MCF 10A (cell line): ENCODE measurements at regions of chr3 and their contacts with region 1.

Region 1: DNA sequence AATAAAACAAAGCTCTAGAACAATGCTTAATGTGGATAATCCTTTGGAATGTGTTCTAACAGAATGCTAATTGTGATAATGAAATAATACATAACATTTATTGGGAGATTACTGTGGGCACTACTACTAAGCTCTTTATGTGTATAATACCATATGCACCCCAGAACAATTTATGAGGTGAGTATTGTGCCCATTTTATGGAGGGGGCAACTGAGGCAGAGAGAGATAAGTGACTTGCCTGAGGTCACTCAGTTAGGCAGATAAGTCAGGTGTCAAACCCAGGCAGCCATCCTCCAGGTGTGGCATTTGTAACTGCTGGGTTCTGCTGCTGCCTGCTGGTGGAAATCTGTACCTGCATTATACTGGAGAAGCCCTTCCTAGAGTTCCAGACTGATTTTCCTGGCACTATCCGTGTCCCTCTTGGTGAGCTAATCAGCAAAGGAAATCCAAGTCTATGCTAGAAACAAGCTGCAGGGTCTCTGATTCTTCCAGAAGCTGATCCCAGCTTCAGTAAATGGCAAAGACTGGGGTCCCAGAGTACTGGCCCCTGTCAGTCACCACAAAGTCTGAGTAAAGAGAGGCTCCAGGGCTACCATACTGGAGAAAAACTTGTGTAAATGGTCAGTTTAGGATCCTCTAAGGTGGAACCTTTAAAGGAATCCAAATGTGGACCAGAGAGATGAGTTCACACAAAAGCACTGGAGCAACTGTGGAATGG is 22.6 kb upstream of the RBP1 start:
- DNase-seq: peak; percentile 56
- H3K4me3 Mint-ChIP-seq: no peak overlapping the region
- H3K27ac Mint-ChIP-seq: no peak overlapping the region
- H3K4me1 Mint-ChIP-seq: peaks cover 19% of the 10 kb centered on the region
- H3K27me3 Mint-ChIP-seq: no peaks in the 10 kb centered on the region
- CTCF ChIP-seq: peak; percentile 77

Region 2: DNA sequence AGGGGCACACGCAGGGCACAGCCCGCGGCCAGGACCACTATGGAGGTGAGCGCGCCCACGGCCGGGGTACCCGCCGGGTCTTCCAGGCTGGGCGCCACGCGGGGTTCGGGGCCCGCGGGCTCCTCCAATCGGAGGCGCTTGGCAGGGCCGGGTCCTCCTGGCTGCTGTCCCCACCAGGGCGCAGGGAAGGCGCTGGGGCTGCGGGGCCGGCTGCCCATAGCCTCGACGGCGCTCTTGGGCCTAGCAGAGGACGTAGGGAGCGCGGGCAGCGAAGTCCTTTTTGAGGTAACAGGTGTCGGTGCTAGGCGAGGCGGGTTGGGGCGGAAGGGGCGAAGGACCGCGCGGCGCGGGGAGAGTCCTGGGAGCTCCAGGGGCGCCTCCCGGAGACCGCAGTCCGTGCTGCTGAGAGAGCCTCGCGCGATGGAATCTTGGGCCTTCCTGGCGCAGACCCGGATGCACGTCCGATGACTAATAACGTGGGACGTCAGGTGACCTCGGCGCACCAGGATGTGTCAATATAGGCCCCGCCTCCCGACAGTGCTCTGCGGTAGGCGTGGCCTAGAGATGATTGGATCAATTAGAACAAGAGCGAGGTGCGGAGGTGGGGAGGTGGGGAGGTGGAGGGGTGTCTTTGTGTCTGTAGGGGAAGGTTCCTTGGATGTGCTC is 555.9 kb before region 1 on chr3 and contains the start of gene PRR23A:
- CTCF ChIA-PET with region 1: no interaction called
- POLR2A ChIA-PET with region 1: no interaction called
- intact Hi-C with region 1: no loop called
- DNase-seq: no peak
- H3K4me3 Mint-ChIP-seq: no peak within 1 kb of the TSS
- H3K27ac Mint-ChIP-seq: no peak within 1 kb of the TSS
- H3K4me1 Mint-ChIP-seq: no peaks in the 10 kb centered on the region
- H3K27me3 Mint-ChIP-seq: no peaks in the 10 kb centered on the region
- CTCF ChIP-seq: no peak
- total RNA-seq, gene PRR23A: not detected in 2 replicates

Region 3: GRCh38 chr3:139074565-139075115 is 487.5 kb before region 1 on chr3:
- CTCF ChIA-PET with region 1: no interaction called
- POLR2A ChIA-PET with region 1: no interaction called
- intact Hi-C with region 1: no loop called
- DNase-seq: no peak
- H3K4me3 Mint-ChIP-seq: no peak overlapping the region
- H3K27ac Mint-ChIP-seq: no peak overlapping the region
- H3K4me1 Mint-ChIP-seq: no peaks in the 10 kb centered on the region
- H3K27me3 Mint-ChIP-seq: peaks cover 23% of the 10 kb centered on the region
- CTCF ChIP-seq: no peak

Region 4: GRCh38 chr3:139427283-139427993 is 134.7 kb before region 1 on chr3:
- CTCF ChIA-PET with region 1: interaction called, 234 read pairs
- POLR2A ChIA-PET with region 1: interaction called, 9 read pairs
- intact Hi-C with region 1: loop called (anchors 1 kb)
- DNase-seq: peak; percentile 82
- H3K4me3 Mint-ChIP-seq: no peak overlapping the region
- H3K27ac Mint-ChIP-seq: no peak overlapping the region
- H3K4me1 Mint-ChIP-seq: peaks cover 6% of the 10 kb centered on the region
- H3K27me3 Mint-ChIP-seq: no peaks in the 10 kb centered on the region
- CTCF ChIP-seq: peak; percentile 83

Region 5: DNA sequence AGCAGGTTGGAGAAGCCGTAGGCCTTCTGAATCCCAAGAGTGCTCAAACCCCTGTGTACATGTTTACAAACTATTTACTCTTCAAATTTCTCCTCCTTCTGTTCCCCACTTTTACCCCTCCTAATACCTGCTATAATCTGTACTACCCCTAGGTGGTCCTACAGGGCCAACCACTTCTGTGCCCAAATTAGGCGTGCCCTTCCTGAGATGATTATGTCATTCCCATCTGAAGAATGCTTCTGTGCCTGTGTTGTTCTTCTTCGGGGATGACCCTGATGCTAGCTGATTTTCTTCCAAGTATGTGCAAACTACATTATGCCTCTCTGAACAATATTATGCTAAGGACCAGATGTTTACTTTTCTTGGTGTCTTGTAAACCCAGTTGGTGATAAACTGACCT is 106.3 kb before region 1 on chr3:
- CTCF ChIA-PET with region 1: interaction called, 12 read pairs
- POLR2A ChIA-PET with region 1: interaction called, 3 read pairs
- intact Hi-C with region 1: no loop called
- DNase-seq: no peak
- H3K4me3 Mint-ChIP-seq: no peak overlapping the region
- H3K27ac Mint-ChIP-seq: no peak overlapping the region
- H3K4me1 Mint-ChIP-seq: no peaks in the 10 kb centered on the region
- H3K27me3 Mint-ChIP-seq: no peaks in the 10 kb centered on the region
- CTCF ChIP-seq: no peak

Region 6: GRCh38 chr3:139533781-139534443 is 28.2 kb before region 1 on chr3:
- CTCF ChIA-PET with region 1: interaction called, 6 read pairs
- POLR2A ChIA-PET with region 1: interaction called, 11 read pairs
- intact Hi-C with region 1: no loop called
- DNase-seq: peak; percentile 27
- H3K4me3 Mint-ChIP-seq: no peak overlapping the region
- H3K27ac Mint-ChIP-seq: peak overlapping the region; percentile 86
- H3K4me1 Mint-ChIP-seq: peaks cover 30% of the 10 kb centered on the region
- H3K27me3 Mint-ChIP-seq: no peaks in the 10 kb centered on the region
- CTCF ChIP-seq: no peak

Region 7: DNA sequence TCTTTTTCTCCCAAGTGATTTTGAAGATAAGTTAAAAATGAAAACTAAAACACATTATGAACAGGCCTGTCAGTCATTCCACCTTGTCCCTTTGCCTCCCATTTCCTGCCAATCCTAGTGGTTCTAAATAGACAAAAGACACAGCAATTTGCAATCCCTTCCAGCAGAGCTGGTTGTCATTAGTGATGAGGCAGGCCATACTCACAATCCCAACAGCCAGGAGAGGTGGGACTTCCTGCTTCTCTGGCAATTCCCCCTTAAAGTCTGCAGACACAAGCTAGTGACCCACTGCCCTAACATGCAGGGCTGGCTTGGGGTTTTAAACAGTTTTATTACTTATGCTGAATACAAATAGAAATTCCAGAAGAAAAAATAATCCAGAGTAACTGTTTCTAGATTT is 15.8 kb after region 1 on chr3:
- CTCF ChIA-PET with region 1: interaction called, 22 read pairs
- POLR2A ChIA-PET with region 1: no interaction called
- intact Hi-C with region 1: no loop called
- DNase-seq: no peak
- H3K4me3 Mint-ChIP-seq: no peak overlapping the region
- H3K27ac Mint-ChIP-seq: no peak overlapping the region
- H3K4me1 Mint-ChIP-seq: no peaks in the 10 kb centered on the region
- H3K27me3 Mint-ChIP-seq: no peaks in the 10 kb centered on the region
- CTCF ChIP-seq: no peak

Region 8: GRCh38 chr3:139975594-139976365 is 413.7 kb after region 1 on chr3:
- CTCF ChIA-PET with region 1: no interaction called
- POLR2A ChIA-PET with region 1: no interaction called
- intact Hi-C with region 1: no loop called
- DNase-seq: no peak
- H3K4me3 Mint-ChIP-seq: no peak overlapping the region
- H3K27ac Mint-ChIP-seq: no peak overlapping the region
- H3K4me1 Mint-ChIP-seq: no peaks in the 10 kb centered on the region
- H3K27me3 Mint-ChIP-seq: no peaks in the 10 kb centered on the region
- CTCF ChIP-seq: no peak